G401 (cell line): ENCODE measurements at regions of chr15 and their contacts with region 1.

Region 1: DNA sequence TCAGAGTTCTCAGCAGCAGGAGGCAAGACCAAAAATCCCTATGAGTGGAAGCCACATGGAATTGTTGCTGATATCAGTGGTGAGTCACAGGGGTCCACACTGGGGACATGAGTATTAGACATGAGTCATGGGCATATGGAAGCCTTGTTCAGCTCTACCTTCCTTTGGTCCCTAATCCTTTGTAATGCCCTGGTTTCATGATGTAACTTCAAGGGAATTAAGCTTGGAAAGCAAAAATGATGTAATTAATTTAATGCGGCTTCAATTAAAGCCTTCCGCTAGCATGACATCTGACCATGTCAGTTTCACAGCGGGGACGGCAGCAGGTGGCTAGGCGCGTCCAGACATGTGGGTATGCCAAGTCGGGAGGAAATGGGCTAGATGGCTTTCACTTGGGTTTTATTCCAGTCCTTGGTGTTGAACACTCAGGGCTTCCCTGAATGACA is 176.1 kb upstream of the RGMA start:
- DNase-seq: no peak

Region 2: DNA sequence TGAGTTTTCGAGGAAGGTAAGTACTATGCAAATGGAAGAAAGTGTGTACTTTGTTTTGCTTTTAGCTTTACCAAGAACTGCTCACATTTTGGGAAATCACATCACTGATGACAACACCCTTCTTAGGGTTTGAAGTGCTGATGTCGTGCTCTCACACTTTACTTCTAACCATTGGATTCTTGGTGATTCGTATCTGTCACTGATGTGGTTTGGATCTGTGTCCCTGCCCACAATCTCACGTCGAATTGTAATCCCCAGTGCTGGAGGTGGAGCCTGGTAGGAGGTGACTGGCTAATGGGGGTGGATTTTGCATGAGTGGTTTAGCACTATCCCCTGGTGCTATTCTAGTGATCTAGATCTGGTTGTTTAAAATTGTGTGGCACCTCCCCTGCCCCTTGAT is 100.7 kb before region 1 on chr15:
- in situ Hi-C with region 1: no loop called
- DNase-seq: no peak

Region 3: GRCh38 chr15:93362821-93363220 is 97.7 kb after region 1 on chr15:
- in situ Hi-C with region 1: loop called (anchors 5 kb)
- DNase-seq: no peak